ENCODE measurements at regions of chr3 and their contacts with region 1.

Region 1: DNA sequence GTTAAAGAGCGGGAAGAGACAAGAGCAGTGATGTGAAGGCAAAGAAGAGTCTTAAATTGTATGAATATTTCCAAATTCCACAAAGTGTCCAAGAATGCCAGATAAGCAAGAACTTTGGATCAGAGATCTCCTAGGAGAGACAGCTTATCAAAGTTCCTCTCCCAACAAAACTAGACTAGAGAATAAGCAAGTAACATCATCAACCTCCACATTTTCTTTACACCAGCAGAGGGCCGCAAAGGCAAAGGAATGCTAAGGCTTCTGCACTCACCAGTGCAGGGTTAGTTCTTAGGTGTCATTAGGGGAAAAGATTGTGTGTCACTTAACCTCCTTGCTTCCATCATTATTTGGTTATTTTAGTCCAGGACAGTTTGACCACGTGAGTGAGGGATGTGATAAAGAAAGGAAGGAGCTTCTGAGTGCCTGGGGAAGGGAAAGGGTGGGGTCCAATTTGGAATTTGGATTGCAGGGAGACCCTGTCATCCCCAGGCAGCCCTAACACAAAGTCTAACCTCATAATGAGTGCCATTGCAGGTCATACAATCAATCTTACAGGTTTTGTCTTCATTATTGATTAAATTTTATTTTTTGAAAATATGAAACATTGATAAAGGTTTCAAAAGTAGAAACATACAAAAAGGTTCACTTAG is 7.5 kb upstream of the CMTM6 start:
- DNase-seq: peak; percentile 71
- H3K4me3 ChIP-seq: no peak overlapping the region; a peak in 1 of 4 replicates
- H3K27ac ChIP-seq: no peak overlapping the region
- H3K4me1 ChIP-seq: no peaks in the 10 kb centered on the region; a peak in 1 of 4 replicates
- H3K27me3 ChIP-seq: no peaks in the 10 kb centered on the region
- CTCF ChIP-seq: peak; percentile 82
- EP300 ChIP-seq: no peak
- RAD21 ChIP-seq: peak; percentile 97

Region 2: GRCh38 chr3:31946484-31947081 is 563.6 kb before region 1 on chr3:
- CTCF ChIA-PET with region 1: no interaction called
- POLR2A ChIA-PET with region 1: no interaction called
- DNase-seq: no peak
- H3K4me3 ChIP-seq: no peak overlapping the region
- H3K27ac ChIP-seq: no peak overlapping the region
- H3K4me1 ChIP-seq: no peaks in the 10 kb centered on the region
- H3K27me3 ChIP-seq: no peaks in the 10 kb centered on the region
- CTCF ChIP-seq: no peak
- EP300 ChIP-seq: no peak
- RAD21 ChIP-seq: no peak

Region 3: DNA sequence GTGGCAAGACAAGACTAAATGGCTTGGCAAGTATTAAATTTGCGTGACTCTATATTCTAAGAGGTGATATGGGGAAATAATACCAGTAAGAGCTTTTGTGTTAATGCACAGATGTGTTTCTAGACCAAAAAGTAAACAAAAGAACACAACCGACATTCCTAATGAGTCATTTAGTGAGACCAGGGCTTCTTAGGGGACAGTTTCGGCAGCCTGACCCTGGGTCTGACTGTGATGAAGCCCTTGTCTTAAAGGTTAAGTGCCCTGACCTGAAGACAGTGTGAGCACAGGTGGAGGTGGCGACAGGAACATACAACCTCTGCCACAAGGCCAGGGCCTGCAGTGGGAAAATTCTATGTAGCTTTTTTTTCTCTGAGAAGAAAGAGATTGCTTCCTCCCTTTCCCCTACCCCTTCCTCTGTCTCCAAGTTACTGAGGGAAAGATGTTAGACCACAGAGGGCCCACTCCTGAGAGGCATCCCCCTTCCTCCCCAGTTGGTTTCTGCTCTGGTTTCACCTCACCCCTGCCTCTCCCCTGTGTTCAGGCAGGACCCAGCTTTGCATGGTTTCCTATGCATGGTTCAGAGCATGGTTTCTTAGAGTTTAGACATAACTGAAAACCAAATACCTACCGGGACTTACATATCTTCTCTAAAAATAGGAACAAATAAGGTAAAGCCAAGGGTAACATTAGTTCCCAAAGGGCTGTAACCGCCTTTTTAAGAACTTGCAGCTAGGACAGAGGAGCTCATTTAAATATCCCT is 143.4 kb before region 1 on chr3:
- CTCF ChIA-PET with region 1: no interaction called
- POLR2A ChIA-PET with region 1: no interaction called
- DNase-seq: no peak
- H3K4me3 ChIP-seq: no peak overlapping the region
- H3K27ac ChIP-seq: no peak overlapping the region
- H3K4me1 ChIP-seq: no peaks in the 10 kb centered on the region
- H3K27me3 ChIP-seq: no peaks in the 10 kb centered on the region
- CTCF ChIP-seq: no peak
- EP300 ChIP-seq: no peak
- RAD21 ChIP-seq: no peak

Region 4: GRCh38 chr3:32522682-32523081 is 12.5 kb after region 1 on chr3:
- CTCF ChIA-PET with region 1: interaction called, 17 read pairs
- POLR2A ChIA-PET with region 1: no interaction called
- DNase-seq: no peak
- H3K4me3 ChIP-seq: no peak overlapping the region
- H3K27ac ChIP-seq: no peak overlapping the region
- H3K4me1 ChIP-seq: no peaks in the 10 kb centered on the region
- H3K27me3 ChIP-seq: no peaks in the 10 kb centered on the region
- CTCF ChIP-seq: no peak
- EP300 ChIP-seq: no peak
- RAD21 ChIP-seq: no peak

Region 5: DNA sequence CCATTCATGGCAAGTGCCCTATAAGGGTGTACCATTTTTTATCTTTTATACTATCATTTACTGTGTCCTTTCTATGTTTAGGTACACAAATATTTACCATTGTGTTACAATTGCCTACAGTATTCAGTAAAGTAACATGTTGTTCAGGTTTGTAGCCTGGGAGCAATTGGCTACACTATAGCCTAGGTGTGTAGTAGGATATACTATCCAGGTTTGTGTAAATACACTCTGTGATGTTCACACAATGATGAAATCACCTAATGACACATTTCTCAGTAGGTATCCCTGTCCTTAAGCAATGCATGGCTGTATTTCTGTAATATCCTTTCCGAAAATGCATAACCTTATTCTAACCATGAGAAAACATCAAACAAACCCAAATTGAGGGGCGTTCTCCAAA is 156.9 kb after region 1 on chr3:
- CTCF ChIA-PET with region 1: interaction called, 114 read pairs
- POLR2A ChIA-PET with region 1: no interaction called
- DNase-seq: no peak
- H3K4me3 ChIP-seq: no peak overlapping the region
- H3K27ac ChIP-seq: no peak overlapping the region
- H3K4me1 ChIP-seq: no peaks in the 10 kb centered on the region
- H3K27me3 ChIP-seq: no peaks in the 10 kb centered on the region
- CTCF ChIP-seq: no peak
- EP300 ChIP-seq: no peak
- RAD21 ChIP-seq: no peak

Measured in SK-N-SH (cell line).